HepG2 (cell line): ENCODE measurements at regions of chr14 and their contacts with region 1.

Region 1: GRCh38 chr14:32202998-32203882 is at the start of gene RNU6-8:
- DNase-seq: peak; percentile 96
- ATAC-seq: peak; percentile 84
- H3K4me3 ChIP-seq: peak within 1 kb of the TSS; percentile 69 to 81 (median 75)
- H3K27ac ChIP-seq: peak within 1 kb of the TSS; percentile 87
- H3K4me1 ChIP-seq: peaks cover 21% of the 10 kb centered on the region
- H3K27me3 ChIP-seq: no peaks in the 10 kb centered on the region; a peak in 1 of 5 replicates
- CTCF ChIP-seq: no peak; the same call in 1 of the 2 replicates
- EP300 ChIP-seq: peak in 1 of 2 experiments; percentile 35; a peak in 1 of 4 replicates
- POLR2A ChIP-seq: peak in 1 of 2 experiments; percentile 66; a peak in 2 of 4 replicates
- RAD21 ChIP-seq: peak; percentile 55
- total RNA-seq, gene RNU6-8: under 0.01 TPM in 1 of 2 replicates, not detected in the other

Region 2: GRCh38 chr14:30558675-30559555 is 1644.3 kb before region 1 on chr14 and contains the start of gene G2E3:
- CTCF ChIA-PET with region 1: no interaction called
- POLR2A ChIA-PET with region 1: no interaction called
- in situ Hi-C with region 1: no loop called
- intact Hi-C with region 1: loop called (anchors 1 kb)
- DNase-seq: peak; percentile 97
- ATAC-seq: peak; percentile 99
- H3K4me3 ChIP-seq: peak within 1 kb of the TSS; percentile 87 to 98 (median 98)
- H3K27ac ChIP-seq: peak within 1 kb of the TSS; percentile 80
- H3K4me1 ChIP-seq: peaks cover 34% of the 10 kb centered on the region
- H3K27me3 ChIP-seq: peaks cover 0 to 2% of the 10 kb centered on the region in 2 experiments; a peak in 1 of 5 replicates
- CTCF ChIP-seq: peak; percentile 34
- EP300 ChIP-seq: peak in 1 of 2 experiments; percentile 51; a peak in 1 of 4 replicates
- POLR2A ChIP-seq: peak; percentile 93 to 97
- RAD21 ChIP-seq: no peak; the same call in 1 of the 2 replicates
- total RNA-seq, gene G2E3: 63.0 and 90.7 TPM in 2 replicates

Region 3: DNA sequence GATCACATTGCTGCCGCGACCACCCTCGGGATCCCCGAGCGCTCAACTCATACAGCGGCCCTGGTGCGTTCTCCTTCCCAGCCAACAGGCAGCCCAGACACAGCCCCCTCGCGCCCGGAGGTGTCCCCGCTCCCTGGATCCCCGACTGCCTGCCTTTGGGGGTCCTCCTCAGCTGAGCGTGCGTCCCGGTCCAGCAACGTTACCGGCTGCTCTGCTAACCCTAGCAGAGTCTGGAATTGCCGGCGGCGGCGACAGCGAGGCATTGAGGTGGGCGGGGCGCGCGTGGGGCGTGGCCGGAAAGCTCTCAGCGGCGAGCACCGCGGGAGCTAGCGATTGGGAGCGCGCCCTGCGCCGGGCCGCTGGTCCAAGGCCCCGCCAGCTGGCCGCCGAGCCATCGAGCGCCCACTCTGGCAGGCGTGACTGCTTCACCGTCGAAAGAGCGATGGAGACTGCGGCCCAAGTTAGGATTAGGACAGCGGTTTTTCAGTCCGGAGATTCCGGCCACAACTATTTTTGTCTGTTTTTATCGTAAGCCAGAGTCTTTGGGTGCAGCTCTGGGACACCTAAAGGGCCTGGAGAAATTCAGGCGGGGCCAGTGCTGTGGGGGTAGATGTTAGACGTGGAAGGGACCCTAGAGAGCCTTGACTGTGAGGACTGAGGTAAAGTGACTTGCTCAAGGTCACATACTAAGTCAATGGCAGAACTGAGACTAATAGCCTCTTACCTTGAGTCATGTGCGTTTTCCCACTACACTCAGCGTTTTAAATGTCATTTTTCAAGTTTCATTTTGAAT is 782.7 kb before region 1 on chr14 and contains the start of gene HEATR5A:
- CTCF ChIA-PET with region 1: no interaction called
- POLR2A ChIA-PET with region 1: interaction called, 12 read pairs
- in situ Hi-C with region 1: no loop called
- intact Hi-C with region 1: no loop called
- DNase-seq: peak; percentile 98
- ATAC-seq: peak; percentile 90
- H3K4me3 ChIP-seq: peak within 1 kb of the TSS; percentile 73 to 99 (median 85)
- H3K27ac ChIP-seq: peak within 1 kb of the TSS; percentile 89
- H3K4me1 ChIP-seq: peaks cover 27% of the 10 kb centered on the region
- H3K27me3 ChIP-seq: no peaks in the 10 kb centered on the region; a peak in 1 of 5 replicates
- CTCF ChIP-seq: peak; percentile 76
- EP300 ChIP-seq: peak in 1 of 2 experiments; percentile 87; a peak in 1 of 4 replicates
- POLR2A ChIP-seq: peak in 1 of 2 experiments; percentile 99; a peak in 2 of 4 replicates
- RAD21 ChIP-seq: peak; percentile 74
- total RNA-seq, gene HEATR5A: 105 and 172 TPM in 2 replicates

Region 4: DNA sequence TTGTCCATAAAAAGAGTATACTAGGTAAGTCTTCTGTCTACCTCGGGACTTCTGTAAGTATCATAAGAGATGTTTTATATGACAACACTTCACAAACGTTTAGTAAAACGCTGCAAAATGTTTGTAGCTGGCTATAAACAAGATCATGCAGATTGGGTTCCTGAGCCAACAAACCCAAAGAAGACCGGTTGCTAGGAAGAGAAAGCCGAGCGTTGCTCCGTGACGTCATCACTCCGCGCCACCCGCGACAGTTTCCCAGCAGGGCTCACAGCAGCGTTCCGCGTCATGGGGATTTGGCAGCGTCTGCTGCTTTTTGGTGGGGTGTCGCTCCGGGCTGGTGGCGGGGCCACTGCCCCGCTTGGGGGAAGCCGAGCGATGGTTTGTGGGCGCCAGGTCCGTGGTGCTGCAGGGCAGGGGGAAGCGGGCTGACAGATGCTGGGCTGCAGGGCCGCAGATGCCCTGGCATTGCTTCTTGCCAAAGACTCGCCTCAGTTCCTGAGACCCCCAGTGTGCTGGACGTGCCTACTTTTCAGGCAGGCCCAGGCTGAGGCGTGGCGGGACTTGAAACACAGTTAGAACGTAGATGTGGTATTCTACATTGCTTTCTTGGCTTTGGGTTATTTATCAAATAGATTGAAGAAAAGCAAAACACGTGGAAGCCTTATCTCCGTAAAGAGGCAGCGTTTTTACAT is 641.9 kb before region 1 on chr14 and contains the start of gene NUBPL:
- CTCF ChIA-PET with region 1: no interaction called
- POLR2A ChIA-PET with region 1: interaction called, 4 read pairs
- in situ Hi-C with region 1: no loop called
- intact Hi-C with region 1: loop called (anchors 5 kb)
- DNase-seq: peak; percentile 97
- ATAC-seq: peak; percentile 95
- H3K4me3 ChIP-seq: peak within 1 kb of the TSS; percentile 84 to 93 (median 89)
- H3K27ac ChIP-seq: peak within 1 kb of the TSS; percentile 67
- H3K4me1 ChIP-seq: peaks cover 30% of the 10 kb centered on the region
- H3K27me3 ChIP-seq: no peaks in the 10 kb centered on the region; a peak in 1 of 5 replicates
- CTCF ChIP-seq: peak; percentile 43
- EP300 ChIP-seq: peak; percentile 80 to 91
- POLR2A ChIP-seq: peak; percentile 90 to 98
- RAD21 ChIP-seq: peak; percentile 73
- total RNA-seq, gene NUBPL: 44.1 and 67.1 TPM in 2 replicates

Region 5: GRCh38 chr14:32150392-32150791 is 52.8 kb before region 1 on chr14:
- CTCF ChIA-PET with region 1: no interaction called
- POLR2A ChIA-PET with region 1: no interaction called
- in situ Hi-C with region 1: no loop called
- intact Hi-C with region 1: loop called (anchors 2 kb)
- DNase-seq: no peak
- ATAC-seq: no peak
- H3K4me3 ChIP-seq: no peak overlapping the region
- H3K27ac ChIP-seq: no peak overlapping the region
- H3K4me1 ChIP-seq: no peaks in the 10 kb centered on the region
- H3K27me3 ChIP-seq: no peaks in the 10 kb centered on the region
- CTCF ChIP-seq: no peak
- EP300 ChIP-seq: no peak
- POLR2A ChIP-seq: no peak
- RAD21 ChIP-seq: no peak

Region 6: DNA sequence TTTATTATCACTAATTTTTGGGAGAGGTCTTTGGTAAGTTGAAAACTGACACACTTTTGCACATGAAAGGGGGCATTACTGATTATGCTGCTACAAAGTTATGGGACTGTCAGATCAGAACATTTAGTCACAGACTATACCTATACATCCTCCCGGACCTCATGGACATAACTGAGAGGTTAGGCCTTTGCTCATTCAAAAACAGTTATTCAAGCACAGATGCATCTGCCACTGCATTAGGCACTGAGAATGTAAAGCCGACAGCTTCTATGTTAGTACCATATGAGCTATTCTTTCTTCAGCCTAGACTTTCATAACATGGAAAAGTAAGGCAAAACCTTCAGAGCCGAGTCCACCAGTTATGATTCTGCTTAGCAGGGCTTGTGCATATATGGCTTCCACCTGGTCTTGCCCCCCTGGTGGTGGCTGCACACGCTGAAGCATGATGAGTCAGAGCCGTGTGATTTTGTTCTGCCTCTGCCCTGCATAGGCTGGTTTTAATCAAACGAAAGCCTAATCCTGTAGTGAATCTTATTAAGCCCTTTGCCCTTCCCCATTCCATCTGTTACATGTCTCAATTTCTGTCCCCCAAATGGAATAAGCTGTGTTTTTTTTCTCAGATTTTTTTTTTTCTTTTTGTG is 21.6 kb after region 1 on chr14:
- CTCF ChIA-PET with region 1: no interaction called
- POLR2A ChIA-PET with region 1: no interaction called
- in situ Hi-C with region 1: no loop called
- intact Hi-C with region 1: loop called (anchors 2 kb)
- DNase-seq: peak; percentile 68
- ATAC-seq: peak; percentile 99
- H3K4me3 ChIP-seq: no peak overlapping the region
- H3K27ac ChIP-seq: no peak overlapping the region
- H3K4me1 ChIP-seq: peaks cover 6% of the 10 kb centered on the region; the same call in 1 of the 2 replicates
- H3K27me3 ChIP-seq: no peaks in the 10 kb centered on the region
- CTCF ChIP-seq: peak; percentile 64
- EP300 ChIP-seq: no peak
- POLR2A ChIP-seq: no peak
- RAD21 ChIP-seq: peak; percentile 38; the same call in 1 of the 2 replicates

Region 7: DNA sequence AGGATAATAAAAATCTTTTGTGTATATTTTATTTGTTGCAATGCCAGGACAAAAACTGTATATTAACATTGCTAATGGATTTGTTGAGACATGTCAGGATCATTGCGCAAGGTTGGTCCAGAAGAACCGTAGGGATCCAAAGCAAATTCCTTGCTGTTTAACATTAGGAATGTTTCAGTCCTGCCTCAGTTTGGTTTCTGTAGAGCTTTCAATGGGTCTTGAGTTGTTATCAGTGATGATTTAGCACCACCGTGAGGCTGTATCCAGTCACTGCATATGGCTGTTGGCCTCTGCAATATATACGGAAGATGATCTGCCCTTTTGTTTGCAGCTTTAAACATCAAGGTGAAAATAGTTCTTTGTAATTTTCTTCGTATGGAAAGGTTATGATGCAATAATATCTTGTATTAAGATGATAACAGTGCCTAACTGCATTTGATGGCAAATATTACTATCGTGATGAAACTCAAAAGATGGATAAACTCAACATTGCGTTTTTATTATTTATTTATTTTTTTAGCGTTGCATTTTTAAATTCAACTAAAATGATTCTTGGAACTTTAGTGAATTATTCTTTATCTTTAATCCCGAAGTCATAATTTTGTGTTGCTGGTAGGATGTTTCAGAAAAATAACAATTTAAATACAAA is 357.1 kb after region 1 on chr14:
- CTCF ChIA-PET with region 1: no interaction called
- POLR2A ChIA-PET with region 1: no interaction called
- in situ Hi-C with region 1: no loop called
- intact Hi-C with region 1: loop called (anchors 5 kb)
- DNase-seq: peak; percentile 82
- ATAC-seq: peak; percentile 98
- H3K4me3 ChIP-seq: no peak overlapping the region
- H3K27ac ChIP-seq: no peak overlapping the region
- H3K4me1 ChIP-seq: no peaks in the 10 kb centered on the region
- H3K27me3 ChIP-seq: no peaks in the 10 kb centered on the region
- CTCF ChIP-seq: peak; percentile 98
- EP300 ChIP-seq: no peak
- POLR2A ChIP-seq: no peak
- RAD21 ChIP-seq: peak; percentile 87